Vagina (tissue), 2 donors: ENCODE measurements at regions of chr2 and their contacts with region 1.

Region 1: DNA sequence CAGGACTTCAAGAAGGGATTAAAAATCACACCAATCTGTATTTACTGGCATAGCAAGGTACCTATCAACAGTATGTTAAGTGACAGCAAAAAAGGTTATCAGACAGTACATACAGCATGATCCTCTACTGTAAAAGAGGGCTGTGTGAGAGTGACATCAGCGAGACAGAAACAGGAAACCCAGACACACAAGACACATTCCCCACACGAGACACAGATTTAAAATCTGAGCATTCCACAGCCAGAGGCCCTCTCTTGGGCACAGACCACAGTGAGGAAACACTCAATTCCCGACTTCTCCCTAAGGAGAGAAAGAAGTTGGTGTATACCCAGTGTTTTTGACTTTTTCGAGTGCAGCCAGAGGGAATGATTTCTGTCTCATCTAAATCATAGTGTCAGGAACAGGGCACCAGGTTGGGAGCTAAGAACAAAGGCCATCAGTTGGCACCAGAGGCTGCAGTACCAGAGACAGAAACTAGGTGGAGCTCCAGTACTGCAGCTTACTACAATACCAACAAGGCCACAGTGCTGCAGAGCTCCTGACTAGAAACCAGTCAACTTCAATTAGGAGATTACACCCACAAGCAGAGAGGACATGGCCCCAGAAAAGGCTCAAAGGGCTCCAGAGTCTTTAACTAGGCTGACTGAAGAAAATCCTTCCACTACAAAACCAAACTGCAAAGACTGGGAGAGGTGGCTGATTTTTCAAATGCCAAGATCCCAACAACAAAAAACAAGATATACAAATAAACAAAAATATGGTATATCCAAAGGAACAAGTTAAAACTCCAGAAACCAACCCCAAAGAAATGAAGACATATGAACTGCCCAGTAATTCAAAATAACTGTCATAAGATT is 41.0 kb downstream of the UNC50 start:
- DNase-seq: no peak
- H3K4me3 ChIP-seq: no peak overlapping the region
- H3K27ac ChIP-seq: no peak overlapping the region
- H3K4me1 ChIP-seq: no peaks in the 10 kb centered on the region
- H3K27me3 ChIP-seq: no peaks in the 10 kb centered on the region
- CTCF ChIP-seq: peak; percentile 87 to 94 (median 93)
- POLR2A ChIP-seq: no peak

Region 2: GRCh38 chr2:98822301-98823164 is 173.2 kb after region 1 on chr2:
- intact Hi-C with region 1: no loop called
- DNase-seq: no peak
- H3K4me3 ChIP-seq: peak overlapping the region; percentile 40 to 46
- H3K27ac ChIP-seq: peak overlapping the region; percentile 77
- H3K4me1 ChIP-seq: peaks cover 9% of the 10 kb centered on the region
- H3K27me3 ChIP-seq: no peaks in the 10 kb centered on the region
- CTCF ChIP-seq: no peak
- POLR2A ChIP-seq: no peak

Region 3: GRCh38 chr2:98835831-98836385 is 186.5 kb after region 1 on chr2:
- intact Hi-C with region 1: loop called (anchors 5 kb)
- DNase-seq: no peak
- H3K4me3 ChIP-seq: no peak overlapping the region
- H3K27ac ChIP-seq: no peak overlapping the region
- H3K4me1 ChIP-seq: no peaks in the 10 kb centered on the region
- H3K27me3 ChIP-seq: no peaks in the 10 kb centered on the region
- CTCF ChIP-seq: no peak
- POLR2A ChIP-seq: no peak